Activated CD4-positive, alpha-beta memory T cell treated with anti-CD3 and anti-CD28 coated beads for 36 hours (primary cell): ENCODE measurements at regions of chr16 and their contacts with region 1.

Region 1: GRCh38 chr16:72124761-72125634 is 31.4 kb downstream of the DHX38 start:
- DNase-seq: peak; percentile 74
- H3K4me3 Mint-ChIP-seq: no peak overlapping the region
- H3K27ac Mint-ChIP-seq: no peak overlapping the region
- H3K4me1 Mint-ChIP-seq: no peaks in the 10 kb centered on the region
- H3K27me3 Mint-ChIP-seq: no peaks in the 10 kb centered on the region

Region 2: DNA sequence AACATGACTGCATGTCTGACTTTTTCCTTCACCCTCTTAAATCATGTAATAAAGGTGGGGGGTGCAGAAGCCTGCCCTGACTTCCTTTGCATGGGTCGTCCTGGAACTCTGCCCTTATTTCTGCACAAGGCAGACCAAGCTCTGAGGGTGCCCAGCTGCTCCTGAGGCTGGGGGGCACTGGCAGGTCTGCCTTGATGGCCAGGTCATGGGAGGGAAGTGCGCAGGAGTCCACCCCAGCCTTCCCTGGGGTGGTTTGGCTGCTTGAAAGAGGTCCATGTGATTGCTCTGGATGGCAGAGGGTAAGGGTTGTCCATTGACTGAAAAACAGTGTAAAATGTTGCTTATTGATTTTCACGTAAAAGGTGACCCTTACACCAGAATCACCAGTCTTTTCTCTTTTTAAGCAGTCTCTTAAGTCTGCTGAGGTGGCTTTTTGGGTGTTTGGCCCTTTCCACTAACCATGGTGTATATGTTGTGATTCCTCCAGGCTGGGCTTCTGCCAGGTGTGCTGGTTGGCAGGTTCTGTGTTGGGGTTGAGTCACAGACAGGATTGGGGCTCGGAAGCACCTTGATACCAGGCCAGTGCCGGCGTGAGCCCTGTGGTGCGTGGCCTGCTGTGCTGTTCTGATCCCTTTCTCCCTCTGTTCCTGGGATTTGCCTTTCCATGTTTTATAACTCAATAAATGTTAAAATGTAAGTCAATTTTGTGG is 11.9 kb before region 1 on chr16:
- CTCF ChIA-PET with region 1: interaction called, 11 read pairs
- POLR2A ChIA-PET with region 1: no interaction called
- intact Hi-C with region 1: no loop called
- DNase-seq: no peak
- H3K4me3 Mint-ChIP-seq: no peak overlapping the region
- H3K27ac Mint-ChIP-seq: no peak overlapping the region
- H3K4me1 Mint-ChIP-seq: no peaks in the 10 kb centered on the region
- H3K27me3 Mint-ChIP-seq: no peaks in the 10 kb centered on the region

Region 3: DNA sequence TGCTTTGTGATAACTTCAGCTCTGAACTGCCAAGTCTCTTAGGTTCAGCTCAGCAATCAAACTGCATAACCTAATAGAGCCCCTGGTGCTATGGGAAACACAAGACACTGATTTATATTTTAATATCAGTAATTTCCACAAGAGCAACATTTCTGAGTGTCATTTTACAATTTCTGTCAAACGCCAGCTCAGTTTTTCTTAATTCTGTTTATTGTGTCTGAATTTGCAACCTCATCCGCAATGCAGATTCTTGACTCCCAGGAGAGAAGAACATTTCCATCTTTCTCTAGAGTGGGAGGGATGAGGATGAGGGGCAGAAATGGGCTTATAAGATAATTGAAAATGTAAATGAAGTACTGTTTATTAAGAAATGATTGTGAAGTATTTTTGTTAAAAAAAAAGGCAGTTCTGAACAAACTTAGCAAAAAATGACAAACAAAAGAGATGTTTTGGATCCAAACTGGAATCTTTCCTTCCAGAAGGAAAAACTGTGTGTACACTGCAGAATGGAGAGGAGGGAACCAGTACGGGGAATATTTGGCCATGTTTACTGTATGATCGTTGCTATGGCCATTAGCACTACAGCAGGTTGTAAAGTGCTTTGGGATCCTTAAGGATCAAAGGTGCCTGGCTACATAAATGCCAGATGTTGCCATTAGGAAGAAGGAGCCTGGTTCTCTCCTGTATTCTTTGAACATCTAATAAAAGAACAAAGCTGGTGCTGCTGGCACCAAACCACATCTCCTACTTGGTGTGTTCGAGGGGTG is 54.4 kb after region 1 on chr16:
- CTCF ChIA-PET with region 1: no interaction called
- POLR2A ChIA-PET with region 1: no interaction called
- intact Hi-C with region 1: no loop called
- DNase-seq: no peak
- H3K4me3 Mint-ChIP-seq: no peak overlapping the region
- H3K27ac Mint-ChIP-seq: no peak overlapping the region
- H3K4me1 Mint-ChIP-seq: no peaks in the 10 kb centered on the region
- H3K27me3 Mint-ChIP-seq: peaks cover 2% of the 10 kb centered on the region

Region 4: GRCh38 chr16:72400257-72400882 is 275.4 kb after region 1 on chr16:
- CTCF ChIA-PET with region 1: interaction called, 4 read pairs
- POLR2A ChIA-PET with region 1: no interaction called
- intact Hi-C with region 1: loop called (anchors 1 kb)
- DNase-seq: peak; percentile 10
- H3K4me3 Mint-ChIP-seq: no peak overlapping the region
- H3K27ac Mint-ChIP-seq: no peak overlapping the region
- H3K4me1 Mint-ChIP-seq: no peaks in the 10 kb centered on the region
- H3K27me3 Mint-ChIP-seq: no peaks in the 10 kb centered on the region

Region 5: GRCh38 chr16:72467157-72467759 is 342.3 kb after region 1 on chr16:
- CTCF ChIA-PET with region 1: interaction called, 29 read pairs
- POLR2A ChIA-PET with region 1: no interaction called
- intact Hi-C with region 1: no loop called
- DNase-seq: no peak
- H3K4me3 Mint-ChIP-seq: no peak overlapping the region
- H3K27ac Mint-ChIP-seq: no peak overlapping the region
- H3K4me1 Mint-ChIP-seq: no peaks in the 10 kb centered on the region
- H3K27me3 Mint-ChIP-seq: no peaks in the 10 kb centered on the region